AG04450 (cell line): ENCODE measurements at regions of chr6 and their contacts with region 1.

Region 1: GRCh38 chr6:33711140-33712129 is at the start of gene UQCC2:
- DNase-seq: peak; percentile 93
- H3K4me3 ChIP-seq: peak within 1 kb of the TSS; percentile 95
- H3K27ac ChIP-seq: peak within 1 kb of the TSS; percentile 84
- H3K27me3 ChIP-seq: peaks cover 8% of the 10 kb centered on the region
- CTCF ChIP-seq: peak; percentile 73
- polyA plus RNA-seq, gene UQCC2: 67.9 and 84.1 TPM in 2 replicates

Region 2: GRCh38 chr6:33585403-33586107 is 125.9 kb before region 1 on chr6:
- CTCF ChIA-PET with region 1: interaction called, 26 read pairs
- POLR2A ChIA-PET with region 1: interaction called, 3 read pairs
- DNase-seq: no peak
- H3K4me3 ChIP-seq: peak overlapping the region; percentile 20; the same call in 1 of the 2 replicates
- H3K27ac ChIP-seq: no peak overlapping the region
- H3K27me3 ChIP-seq: no peaks in the 10 kb centered on the region
- CTCF ChIP-seq: peak; percentile 95

Region 3: GRCh38 chr6:33723371-33724085 is 12.1 kb after region 1 on chr6:
- CTCF ChIA-PET with region 1: interaction called, 16 read pairs
- POLR2A ChIA-PET with region 1: no interaction called
- DNase-seq: no peak
- H3K4me3 ChIP-seq: no peak overlapping the region
- H3K27ac ChIP-seq: no peak overlapping the region
- H3K27me3 ChIP-seq: peaks cover 31% of the 10 kb centered on the region
- CTCF ChIP-seq: no peak

Region 4: DNA sequence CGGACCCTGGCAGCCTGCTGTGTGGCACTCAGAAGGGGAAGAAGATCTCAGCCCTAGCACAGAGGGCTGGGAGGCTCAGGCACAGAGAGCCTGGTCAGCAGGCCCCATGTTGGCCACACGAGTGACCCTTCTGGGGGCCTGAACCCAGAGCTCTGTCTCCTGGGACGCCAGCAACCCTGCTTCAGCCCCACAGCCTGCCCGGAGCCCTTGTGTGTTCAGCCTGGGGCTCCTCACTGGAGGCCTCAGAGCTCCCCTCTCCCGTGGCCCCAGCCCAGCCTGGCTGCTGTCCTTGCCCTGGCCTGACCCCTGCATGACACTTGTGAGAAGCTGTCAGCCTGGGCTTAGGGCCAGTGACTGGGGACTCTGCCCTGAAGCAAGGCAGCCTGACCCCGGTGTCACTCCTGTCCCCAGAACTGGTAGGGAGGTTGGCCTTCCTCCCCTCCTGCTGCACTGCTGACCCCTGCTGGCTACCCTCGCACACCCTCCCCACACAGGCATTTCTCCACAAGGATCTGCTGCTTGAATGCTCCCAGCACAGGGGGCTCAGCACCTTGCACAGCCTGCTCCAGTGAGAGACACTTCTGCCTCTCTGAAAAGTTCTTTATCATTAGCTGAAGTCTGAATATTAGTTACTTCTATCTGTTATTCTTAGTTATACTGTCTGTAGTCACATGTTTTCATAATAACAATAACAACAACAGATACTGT is 50.6 kb after region 1 on chr6:
- CTCF ChIA-PET with region 1: interaction called, 20 read pairs
- POLR2A ChIA-PET with region 1: no interaction called
- DNase-seq: no peak
- H3K4me3 ChIP-seq: no peak overlapping the region
- H3K27ac ChIP-seq: no peak overlapping the region
- H3K27me3 ChIP-seq: peaks cover 7% of the 10 kb centered on the region
- CTCF ChIP-seq: peak; percentile 60

Region 5: DNA sequence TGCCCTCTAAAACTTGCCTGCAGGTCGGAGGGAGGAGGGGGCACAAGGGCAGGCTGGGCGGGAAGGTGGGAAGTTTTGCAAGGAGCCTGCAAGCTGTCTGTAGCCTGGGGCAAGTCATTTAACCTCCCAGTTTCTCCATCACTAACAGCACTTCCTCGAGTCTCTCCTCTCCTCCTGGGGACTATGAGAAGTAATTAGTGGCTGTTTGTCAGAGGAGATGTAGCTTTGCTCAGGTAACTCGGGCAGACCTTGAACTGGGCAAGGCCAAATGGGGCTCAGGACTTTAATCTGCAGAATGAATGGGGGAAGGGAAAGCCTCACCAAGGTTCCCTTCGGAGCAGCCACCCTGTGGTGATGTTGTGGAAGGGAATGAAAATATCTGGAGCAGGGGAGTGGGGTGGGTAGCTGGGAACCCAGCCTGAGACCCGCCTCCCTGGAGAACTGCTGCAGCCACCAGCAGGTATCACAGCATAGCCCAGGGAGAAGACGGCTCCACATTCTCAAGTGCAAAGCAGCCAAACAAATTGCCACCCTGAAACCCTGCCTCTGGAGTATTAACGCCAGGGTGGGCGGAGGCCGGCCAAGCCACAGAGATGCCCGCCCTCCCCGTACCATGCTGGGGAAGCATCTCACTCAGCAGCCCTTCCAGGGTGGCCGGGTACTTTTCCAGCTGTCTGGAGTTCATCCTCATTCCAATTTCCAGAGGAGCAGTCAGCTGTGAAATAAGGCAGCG is 83.6 kb after region 1 on chr6:
- CTCF ChIA-PET with region 1: interaction called, 13 read pairs
- POLR2A ChIA-PET with region 1: no interaction called
- DNase-seq: no peak
- H3K4me3 ChIP-seq: no peak overlapping the region
- H3K27ac ChIP-seq: no peak overlapping the region
- H3K27me3 ChIP-seq: peaks cover 30% of the 10 kb centered on the region
- CTCF ChIP-seq: no peak

Region 6: GRCh38 chr6:34055223-34055933 is 343.9 kb after region 1 on chr6:
- CTCF ChIA-PET with region 1: interaction called, 10 read pairs
- POLR2A ChIA-PET with region 1: no interaction called
- DNase-seq: peak; percentile 8
- H3K4me3 ChIP-seq: no peak overlapping the region
- H3K27ac ChIP-seq: no peak overlapping the region
- H3K27me3 ChIP-seq: peaks cover 33% of the 10 kb centered on the region
- CTCF ChIP-seq: peak; percentile 81

Region 7: GRCh38 chr6:34161857-34162515 is 450.6 kb after region 1 on chr6:
- CTCF ChIA-PET with region 1: interaction called, 51 read pairs
- POLR2A ChIA-PET with region 1: no interaction called
- DNase-seq: no peak
- H3K4me3 ChIP-seq: no peak overlapping the region
- H3K27ac ChIP-seq: no peak overlapping the region
- H3K27me3 ChIP-seq: peaks cover 14% of the 10 kb centered on the region
- CTCF ChIP-seq: no peak